Calu3 (cell line): ENCODE measurements at regions of chr4 and their contacts with region 1.

Region 1: DNA sequence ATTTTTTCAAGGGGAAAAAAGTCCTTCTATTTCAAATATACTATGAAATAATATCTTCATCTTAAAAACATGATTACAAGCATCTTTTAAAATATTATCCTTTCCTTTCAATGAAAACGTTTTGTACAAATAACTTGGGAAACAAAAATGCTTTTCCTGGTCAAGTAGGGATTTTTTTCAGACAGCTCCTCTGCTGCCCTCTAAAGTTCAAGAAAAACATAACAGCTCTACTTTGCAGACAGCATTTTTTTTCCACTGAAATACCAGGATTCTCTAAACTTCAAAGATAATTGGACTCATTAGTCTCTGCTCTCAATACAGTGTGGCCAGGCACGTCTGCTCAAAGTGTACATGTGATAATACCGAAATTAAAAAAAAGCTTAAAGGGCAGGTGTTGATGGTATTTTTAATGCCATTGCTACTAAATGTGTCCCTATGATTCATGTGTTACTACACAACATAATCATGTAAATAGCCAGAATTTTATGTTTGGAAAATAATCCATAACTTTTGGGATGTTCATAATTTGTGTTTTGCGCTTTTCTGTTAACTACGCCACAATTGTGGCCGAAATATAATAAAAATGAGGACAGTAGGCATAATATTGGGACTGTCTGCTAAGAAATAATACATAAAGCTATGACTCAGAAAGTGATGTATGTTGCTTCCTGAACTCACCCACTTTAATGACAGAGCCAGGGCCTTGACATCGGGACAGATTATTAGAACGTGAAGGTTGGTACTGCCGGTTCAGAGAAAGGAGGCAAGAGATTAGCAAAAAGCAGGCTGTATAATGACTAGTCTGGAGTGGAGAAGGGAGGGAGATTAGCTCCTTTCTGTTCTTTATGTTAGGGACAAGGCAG is 478.9 kb downstream of the KCNIP4 start:
- DNase-seq: no peak
- H3K4me3 Mint-ChIP-seq: no peak overlapping the region
- H3K27ac Mint-ChIP-seq: no peak overlapping the region
- H3K4me1 Mint-ChIP-seq: peaks cover 12% of the 10 kb centered on the region
- H3K27me3 Mint-ChIP-seq: peaks cover 43% of the 10 kb centered on the region
- CTCF ChIP-seq: no peak

Region 2: GRCh38 chr4:20773144-20773997 is 696.3 kb before region 1 on chr4:
- CTCF ChIA-PET with region 1: interaction called, 12 read pairs
- intact Hi-C with region 1: loop called (anchors 5 kb)
- DNase-seq: peak; percentile 59
- H3K4me3 Mint-ChIP-seq: no peak overlapping the region
- H3K27ac Mint-ChIP-seq: no peak overlapping the region
- H3K4me1 Mint-ChIP-seq: no peaks in the 10 kb centered on the region
- H3K27me3 Mint-ChIP-seq: no peaks in the 10 kb centered on the region
- CTCF ChIP-seq: peak; percentile 45

Region 3: DNA sequence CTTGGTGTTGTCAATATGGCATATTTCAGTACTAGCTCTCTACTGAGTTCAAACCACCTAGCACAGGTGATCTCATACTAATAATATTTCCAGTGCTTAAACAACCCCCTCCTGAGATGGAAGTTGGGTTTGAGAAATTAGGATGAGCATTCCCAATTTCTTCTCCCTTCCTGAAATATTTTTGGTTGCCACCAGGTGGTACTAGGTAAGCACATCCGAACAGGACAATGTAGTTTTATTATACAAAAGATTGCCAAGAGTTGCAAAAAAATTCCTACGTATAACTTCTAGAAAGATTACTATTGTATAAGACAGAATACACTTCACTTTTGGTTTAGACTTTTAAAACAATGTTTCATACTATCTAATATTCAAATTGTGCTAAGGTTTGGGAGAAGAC is 284.9 kb before region 1 on chr4:
- CTCF ChIA-PET with region 1: no interaction called
- intact Hi-C with region 1: loop called (anchors 10 kb)
- DNase-seq: no peak
- H3K4me3 Mint-ChIP-seq: no peak overlapping the region
- H3K27ac Mint-ChIP-seq: no peak overlapping the region
- H3K4me1 Mint-ChIP-seq: no peaks in the 10 kb centered on the region
- H3K27me3 Mint-ChIP-seq: peaks cover 17% of the 10 kb centered on the region
- CTCF ChIP-seq: no peak

Region 4: DNA sequence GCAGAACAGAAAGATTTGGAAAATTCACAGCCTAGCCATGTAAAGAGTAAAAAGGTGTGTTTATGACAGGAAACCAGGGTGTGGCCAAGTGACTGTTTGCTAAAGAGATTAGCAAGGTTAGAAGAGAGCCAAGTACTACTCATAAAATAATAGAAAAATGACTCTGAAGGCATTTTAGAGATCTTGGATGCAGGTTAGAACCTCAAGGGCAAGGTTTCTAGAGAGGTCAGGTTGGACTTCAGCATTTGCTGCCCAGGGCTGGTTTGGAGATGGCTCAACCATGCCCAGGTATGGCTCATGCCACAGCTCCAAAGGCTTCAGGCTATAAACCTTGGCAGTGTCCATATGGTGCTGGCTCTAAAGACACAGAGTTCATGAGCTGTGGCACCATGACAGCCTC is 1086.8 kb after region 1 on chr4:
- CTCF ChIA-PET with region 1: no interaction called
- intact Hi-C with region 1: no loop called
- DNase-seq: no peak
- H3K4me3 Mint-ChIP-seq: no peak overlapping the region
- H3K27ac Mint-ChIP-seq: no peak overlapping the region
- H3K4me1 Mint-ChIP-seq: no peaks in the 10 kb centered on the region
- H3K27me3 Mint-ChIP-seq: no peaks in the 10 kb centered on the region
- CTCF ChIP-seq: no peak